ENCODE measurements at regions of chr13 and their contacts with region 1.

Region 1: GRCh38 chr13:32472194-32472621 is 44.3 kb upstream of the N4BP2L1 start:
- DNase-seq: no peak
- ATAC-seq: no peak
- H3K4me3 ChIP-seq: no peak overlapping the region
- H3K27ac ChIP-seq: no peak overlapping the region
- H3K4me1 ChIP-seq: no peaks in the 10 kb centered on the region
- H3K27me3 ChIP-seq: no peaks in the 10 kb centered on the region
- CTCF ChIP-seq: no peak
- EP300 ChIP-seq: no peak
- POLR2A ChIP-seq: no peak
- RAD21 ChIP-seq: no peak

Region 2: GRCh38 chr13:32581177-32581786 is 109.1 kb after region 1 on chr13:
- CTCF ChIA-PET with region 1: interaction called, 3 read pairs
- POLR2A ChIA-PET with region 1: no interaction called
- in situ Hi-C with region 1: no loop called
- intact Hi-C with region 1: loop called (anchors 1 kb)
- DNase-seq: peak; percentile 14
- ATAC-seq: no peak
- H3K4me3 ChIP-seq: no peak overlapping the region
- H3K27ac ChIP-seq: no peak overlapping the region
- H3K4me1 ChIP-seq: peaks cover 7% of the 10 kb centered on the region; the same call in 1 of the 2 replicates
- H3K27me3 ChIP-seq: no peaks in the 10 kb centered on the region
- CTCF ChIP-seq: peak; percentile 38
- EP300 ChIP-seq: no peak
- POLR2A ChIP-seq: no peak
- RAD21 ChIP-seq: no peak

Measured in HepG2 (cell line).